CD14-positive monocyte (primary cell): ENCODE measurements at regions of chr20 and their contacts with region 1.

Region 1: GRCh38 chr20:40990542-40991120 is 38.0 kb upstream of the TOP1 start:
- DNase-seq: peak; percentile 69 to 81 (median 79)
- H3K4me3 ChIP-seq: peak overlapping the region in 1 of 3 experiments; percentile 61
- H3K4me3 Mint-ChIP-seq: peak overlapping the region; percentile 59 to 70
- H3K27ac ChIP-seq: peak overlapping the region; percentile 80 to 90
- H3K27ac Mint-ChIP-seq: peak overlapping the region; percentile 95 to 99 (median 98)
- H3K4me1 ChIP-seq: peaks cover 24% of the 10 kb centered on the region in 2 donors
- H3K4me1 Mint-ChIP-seq: peaks cover 27% of the 10 kb centered on the region
- H3K27me3 ChIP-seq: no peaks in the 10 kb centered on the region
- H3K27me3 Mint-ChIP-seq: peaks cover 0 to 3% (median 2%) of the 10 kb centered on the region in 3 donors
- CTCF ChIP-seq: peak; percentile 85

Region 2: DNA sequence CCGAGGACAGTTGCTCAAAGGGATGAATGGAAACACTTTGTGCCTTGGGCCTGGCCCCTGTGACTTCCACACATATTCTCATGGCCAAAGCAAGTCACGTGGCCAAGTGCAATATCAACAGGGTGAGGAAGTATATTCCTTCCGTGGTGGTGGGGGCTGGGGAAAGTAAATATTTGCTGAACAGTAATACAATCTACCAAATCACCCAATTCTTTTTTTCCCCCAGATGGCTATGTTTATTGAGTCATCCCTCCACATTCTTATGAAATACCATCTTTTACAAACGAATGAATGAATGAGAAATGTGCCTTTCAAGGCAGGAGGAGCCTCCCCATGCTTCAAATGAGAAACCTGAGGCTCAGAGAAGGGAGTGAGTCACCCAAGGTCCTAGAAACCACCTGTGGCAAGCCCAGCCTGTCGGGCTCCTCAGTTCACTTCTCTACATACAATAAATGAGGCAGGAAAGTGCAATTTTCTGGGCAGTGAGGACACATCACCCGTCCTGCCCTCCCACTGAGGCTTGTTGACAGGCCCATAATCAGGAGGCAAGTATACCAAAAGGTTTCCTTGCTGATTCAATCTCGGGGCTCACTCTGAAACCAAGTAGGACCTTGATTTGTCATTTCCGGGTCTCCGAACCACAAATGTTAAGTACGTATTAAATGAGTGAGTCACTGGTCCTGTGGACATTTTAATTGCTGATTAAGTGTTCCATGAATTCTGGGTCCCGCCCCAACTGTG is 12.7 kb after region 1 on chr20:
- intact Hi-C with region 1: loop called in 1 of 2 experiments (anchors 1 kb)
- DNase-seq: peak; percentile 88 to 94 (median 91)
- H3K4me3 ChIP-seq: peak overlapping the region in 1 of 3 experiments; percentile 36
- H3K4me3 Mint-ChIP-seq: peak overlapping the region; percentile 59 to 67
- H3K27ac ChIP-seq: peak overlapping the region; percentile 86 to 95
- H3K27ac Mint-ChIP-seq: peak overlapping the region; percentile 97 to 99 (median 99)
- H3K4me1 ChIP-seq: peaks cover 70 to 74% of the 10 kb centered on the region in 2 donors
- H3K4me1 Mint-ChIP-seq: peaks cover 65% of the 10 kb centered on the region
- H3K27me3 ChIP-seq: no peaks in the 10 kb centered on the region
- H3K27me3 Mint-ChIP-seq: peaks cover 0 to 2% (median 0%) of the 10 kb centered on the region in 3 donors
- CTCF ChIP-seq: no peak

Region 3: GRCh38 chr20:41028348-41029148 is 37.9 kb after region 1 on chr20 and contains the start of gene TOP1:
- intact Hi-C with region 1: loop called (anchors 5 kb)
- DNase-seq: peak; percentile 100
- H3K4me3 ChIP-seq: peak within 1 kb of the TSS; percentile 76 to 88 (median 83)
- H3K4me3 Mint-ChIP-seq: peak within 1 kb of the TSS; percentile 88 to 90
- H3K27ac ChIP-seq: peak within 1 kb of the TSS; percentile 77 to 95
- H3K27ac Mint-ChIP-seq: peak within 1 kb of the TSS; percentile 92 to 98 (median 97)
- H3K4me1 ChIP-seq: peaks cover 34 to 47% of the 10 kb centered on the region in 2 donors
- H3K4me1 Mint-ChIP-seq: peaks cover 44% of the 10 kb centered on the region
- H3K27me3 ChIP-seq: no peaks in the 10 kb centered on the region
- H3K27me3 Mint-ChIP-seq: peaks cover 0 to 2% (median 0%) of the 10 kb centered on the region in 3 donors
- CTCF ChIP-seq: no peak
- polyA plus RNA-seq, gene TOP1: 6.9 to 11.5 (median 11.5) TPM

Region 4: DNA sequence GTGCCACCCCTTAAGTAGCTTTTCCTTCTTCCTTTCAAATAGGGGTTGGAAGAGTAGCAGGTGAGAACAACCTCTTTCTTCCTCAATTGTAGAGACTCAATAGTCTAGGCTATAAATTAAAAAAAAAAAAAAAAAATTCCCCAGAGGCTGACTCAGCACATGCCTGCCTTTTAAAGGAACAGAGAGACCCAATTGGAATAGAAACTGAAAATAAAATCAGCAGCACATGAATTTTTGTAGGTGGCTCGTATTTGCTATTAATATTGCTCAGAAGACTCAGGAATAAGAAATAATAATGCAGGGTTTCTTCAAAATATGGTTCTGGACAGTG is 57.3 kb after region 1 on chr20:
- intact Hi-C with region 1: loop called (anchors 5 to 10 kb)
- DNase-seq: peak; percentile 28 to 68 (median 62)
- H3K4me3 ChIP-seq: peak overlapping the region; percentile 12 to 87 (median 77)
- H3K4me3 Mint-ChIP-seq: peak overlapping the region; percentile 72 to 85
- H3K27ac ChIP-seq: peak overlapping the region in 1 of 2 donors; percentile 69
- H3K27ac Mint-ChIP-seq: peak overlapping the region; percentile 72 to 90 (median 80)
- H3K4me1 ChIP-seq: peaks cover 53 to 64% of the 10 kb centered on the region in 2 donors
- H3K4me1 Mint-ChIP-seq: peaks cover 75% of the 10 kb centered on the region
- H3K27me3 ChIP-seq: no peaks in the 10 kb centered on the region
- H3K27me3 Mint-ChIP-seq: peaks cover 0 to 2% (median 0%) of the 10 kb centered on the region in 3 donors
- CTCF ChIP-seq: no peak

Region 5: GRCh38 chr20:41057999-41058896 is 67.6 kb after region 1 on chr20:
- intact Hi-C with region 1: loop called in 1 of 2 experiments (anchors 10 kb)
- DNase-seq: peak in 1 of 3 donors; percentile 47
- H3K4me3 ChIP-seq: no peak overlapping the region
- H3K4me3 Mint-ChIP-seq: no peak overlapping the region
- H3K27ac ChIP-seq: peak overlapping the region in 1 of 2 donors; percentile 0
- H3K27ac Mint-ChIP-seq: peak overlapping the region in 3 of 7 donors; percentile 63 to 74 (median 69)
- H3K4me1 ChIP-seq: peaks cover 0 to 12% of the 10 kb centered on the region in 2 donors
- H3K4me1 Mint-ChIP-seq: peaks cover 26% of the 10 kb centered on the region
- H3K27me3 ChIP-seq: no peaks in the 10 kb centered on the region
- H3K27me3 Mint-ChIP-seq: no peaks in the 10 kb centered on the region
- CTCF ChIP-seq: no peak

Region 6: GRCh38 chr20:41095110-41095969 is 104.7 kb after region 1 on chr20:
- intact Hi-C with region 1: loop called in 1 of 2 experiments (anchors 5 kb)
- DNase-seq: peak; percentile 43 to 62 (median 56)
- H3K4me3 ChIP-seq: no peak overlapping the region
- H3K4me3 Mint-ChIP-seq: no peak overlapping the region
- H3K27ac ChIP-seq: no peak overlapping the region
- H3K27ac Mint-ChIP-seq: peak overlapping the region in 2 of 7 donors; percentile 32 to 35
- H3K4me1 ChIP-seq: no peaks in the 10 kb centered on the region
- H3K4me1 Mint-ChIP-seq: peaks cover 2% of the 10 kb centered on the region
- H3K27me3 ChIP-seq: no peaks in the 10 kb centered on the region
- H3K27me3 Mint-ChIP-seq: no peaks in the 10 kb centered on the region
- CTCF ChIP-seq: peak; percentile 90